CD8-positive, alpha-beta memory T cell (primary cell): ENCODE measurements at regions of chr14 and their contacts with region 1.

Region 1: GRCh38 chr14:49461529-49462401 is 124.4 kb downstream of the RPS29 start:
- DNase-seq: peak; percentile 37 to 71 (median 57)
- H3K4me3 ChIP-seq: no peak overlapping the region
- H3K4me3 Mint-ChIP-seq: no peak overlapping the region
- H3K27ac ChIP-seq: no peak overlapping the region
- H3K27ac Mint-ChIP-seq: peak overlapping the region in 1 of 8 donors; percentile 21
- H3K4me1 ChIP-seq: no peaks in the 10 kb centered on the region
- H3K4me1 Mint-ChIP-seq: no peaks in the 10 kb centered on the region
- H3K27me3 ChIP-seq: no peaks in the 10 kb centered on the region
- H3K27me3 Mint-ChIP-seq: peaks cover 2 to 12% of the 10 kb centered on the region in 2 donors

Region 2: DNA sequence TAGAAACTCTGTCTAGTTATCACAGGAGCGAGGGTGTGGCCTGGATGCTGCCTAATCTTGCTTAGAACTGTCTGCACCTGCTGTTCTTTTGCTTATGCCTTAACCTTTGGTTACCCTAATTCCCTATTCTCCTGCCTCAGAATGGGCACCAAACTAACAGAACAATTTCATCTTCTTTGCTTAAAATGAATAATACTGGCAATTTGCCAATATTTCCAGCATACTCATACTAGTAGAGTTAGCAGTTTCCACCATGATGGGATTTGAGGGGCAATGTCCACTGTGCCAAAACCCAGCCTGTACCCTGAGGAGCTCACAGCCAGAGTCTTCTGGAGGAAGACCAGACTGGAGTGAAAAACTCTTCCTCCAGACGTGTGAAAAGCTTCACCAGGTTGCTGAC is 12.0 kb before region 1 on chr14:
- CTCF ChIA-PET with region 1: interaction called, 13 read pairs
- POLR2A ChIA-PET with region 1: no interaction called
- DNase-seq: no peak
- H3K4me3 ChIP-seq: no peak overlapping the region
- H3K4me3 Mint-ChIP-seq: no peak overlapping the region
- H3K27ac ChIP-seq: no peak overlapping the region
- H3K27ac Mint-ChIP-seq: no peak overlapping the region
- H3K4me1 ChIP-seq: no peaks in the 10 kb centered on the region
- H3K4me1 Mint-ChIP-seq: no peaks in the 10 kb centered on the region
- H3K27me3 ChIP-seq: no peaks in the 10 kb centered on the region
- H3K27me3 Mint-ChIP-seq: peaks cover 9 to 37% of the 10 kb centered on the region in 2 donors

Region 3: DNA sequence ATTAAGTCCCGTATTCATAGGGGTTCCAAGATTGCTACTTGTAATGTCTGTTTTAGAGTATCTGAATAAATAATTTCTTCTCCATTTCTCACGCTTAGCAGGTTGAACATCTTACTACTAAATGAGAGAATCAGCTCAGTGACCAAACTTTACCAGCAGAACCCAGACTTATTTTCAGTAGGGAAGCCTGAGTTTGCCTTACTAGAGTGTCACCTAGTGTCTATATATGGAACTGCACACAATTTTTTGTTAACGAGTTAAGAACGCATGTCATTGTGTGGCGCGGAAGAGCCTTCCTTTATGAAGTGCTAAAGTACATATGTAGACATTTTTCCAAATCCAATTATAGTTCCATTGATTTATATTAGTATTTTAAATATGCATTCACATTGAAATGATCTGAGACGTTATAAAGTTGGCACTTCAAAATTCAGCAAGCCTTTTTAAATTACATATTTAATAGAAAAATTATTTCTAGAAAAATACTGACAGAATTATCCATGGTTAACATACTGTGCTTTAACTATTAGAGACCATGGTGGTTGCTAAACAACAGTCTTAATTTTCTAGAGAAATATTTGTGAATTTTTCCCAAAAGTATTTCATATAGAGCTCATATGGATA is 36.1 kb after region 1 on chr14:
- CTCF ChIA-PET with region 1: interaction called, 10 read pairs
- POLR2A ChIA-PET with region 1: no interaction called
- DNase-seq: peak in 2 of 5 donors; percentile 32 to 43
- H3K4me3 ChIP-seq: no peak overlapping the region
- H3K4me3 Mint-ChIP-seq: no peak overlapping the region
- H3K27ac ChIP-seq: no peak overlapping the region
- H3K27ac Mint-ChIP-seq: no peak overlapping the region
- H3K4me1 ChIP-seq: no peaks in the 10 kb centered on the region
- H3K4me1 Mint-ChIP-seq: no peaks in the 10 kb centered on the region
- H3K27me3 ChIP-seq: peaks cover 4% of the 10 kb centered on the region
- H3K27me3 Mint-ChIP-seq: peaks cover 9 to 41% of the 10 kb centered on the region in 2 donors